ENCODE measurements at regions of chr7 and their contacts with region 1.

Region 1: GRCh38 chr7:47254081-47255006 is 327.6 kb downstream of the TNS3 start:
- DNase-seq: no peak
- ATAC-seq: peak; percentile 90
- H3K4me3 ChIP-seq: peak overlapping the region; percentile 51 to 76
- H3K27ac ChIP-seq: peak overlapping the region; percentile 20; the same call in 1 of the 2 replicates
- H3K4me1 ChIP-seq: peaks cover 8% of the 10 kb centered on the region; the same call in 1 of the 2 replicates
- H3K27me3 ChIP-seq: no peaks in the 10 kb centered on the region; the same call in 1 of the 2 replicates
- CTCF ChIP-seq: peak; percentile 100

Region 2: DNA sequence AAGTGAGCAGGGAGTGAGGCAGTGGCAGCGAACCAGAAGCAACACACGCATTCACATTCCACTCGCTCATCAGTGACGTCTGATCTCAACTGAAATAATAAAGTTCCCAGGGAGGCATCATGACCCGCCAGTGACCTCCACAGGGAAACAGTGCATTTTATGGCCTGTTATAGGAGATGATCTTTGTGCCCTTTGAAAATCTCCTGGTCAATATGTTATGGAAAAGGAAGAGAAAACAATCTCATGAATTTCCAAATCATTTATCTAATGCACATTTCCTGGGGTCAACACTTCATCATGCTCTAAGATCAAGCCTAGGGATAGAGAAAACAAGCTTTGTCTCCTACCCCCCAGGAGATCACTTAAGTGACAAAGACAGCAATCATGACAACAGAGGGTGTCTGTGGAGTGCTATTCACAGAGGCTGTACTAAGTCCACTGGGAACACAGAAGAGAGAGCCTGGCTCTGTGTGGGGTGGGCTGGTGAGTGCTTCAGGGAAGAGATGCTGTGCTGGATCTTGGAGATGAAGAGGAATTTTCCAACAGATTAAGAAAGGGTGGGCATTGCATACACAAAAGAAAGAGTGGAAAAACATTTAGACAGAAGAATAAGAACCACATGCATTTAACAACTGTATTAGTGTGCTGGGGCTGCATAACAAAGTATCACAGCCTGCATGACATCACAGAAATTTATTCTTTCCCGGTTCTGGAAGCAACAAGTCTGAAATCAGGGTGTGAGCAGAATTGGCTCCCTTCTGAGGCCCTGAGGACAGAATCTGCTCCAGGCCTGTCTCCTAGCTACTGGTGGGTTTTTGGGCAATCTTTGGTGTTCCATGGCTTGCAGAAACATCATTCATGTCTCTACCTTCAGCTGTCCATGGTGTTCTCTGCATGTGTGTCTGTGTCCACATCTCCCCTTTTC is 719.4 kb before region 1 on chr7:
- CTCF ChIA-PET with region 1: no interaction called
- POLR2A ChIA-PET with region 1: no interaction called
- in situ Hi-C with region 1: no loop called
- intact Hi-C with region 1: no loop called
- DNase-seq: no peak
- ATAC-seq: no peak
- H3K4me3 ChIP-seq: no peak overlapping the region
- H3K27ac ChIP-seq: no peak overlapping the region
- H3K4me1 ChIP-seq: no peaks in the 10 kb centered on the region
- H3K27me3 ChIP-seq: no peaks in the 10 kb centered on the region
- CTCF ChIP-seq: no peak

Region 3: GRCh38 chr7:47228386-47229014 is 25.8 kb before region 1 on chr7:
- CTCF ChIA-PET with region 1: interaction called, 10 read pairs
- POLR2A ChIA-PET with region 1: no interaction called
- in situ Hi-C with region 1: no loop called
- intact Hi-C with region 1: no loop called
- DNase-seq: no peak
- ATAC-seq: no peak
- H3K4me3 ChIP-seq: no peak overlapping the region
- H3K27ac ChIP-seq: no peak overlapping the region
- H3K4me1 ChIP-seq: no peaks in the 10 kb centered on the region
- H3K27me3 ChIP-seq: peaks cover 2% of the 10 kb centered on the region; the same call in 1 of the 2 replicates
- CTCF ChIP-seq: no peak

Region 4: DNA sequence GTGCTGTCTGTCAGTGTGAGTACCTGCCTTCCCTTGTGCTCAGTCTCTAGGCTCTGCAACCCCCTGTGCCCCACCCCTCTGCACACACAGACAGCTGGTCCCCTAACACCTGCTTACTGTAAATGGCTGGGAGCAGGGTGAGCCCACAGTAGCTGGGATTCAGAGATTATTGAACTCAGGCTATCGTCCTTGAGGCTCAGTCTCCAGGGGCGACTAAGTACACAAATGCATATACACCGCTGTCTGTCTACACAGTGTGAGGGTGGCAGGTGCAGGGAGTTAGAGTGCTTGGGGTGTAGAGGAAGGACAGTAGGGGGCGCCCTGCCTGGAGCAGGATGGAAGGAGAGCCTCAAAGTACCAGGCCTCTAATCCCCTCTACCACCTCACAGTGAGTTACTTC is 847.6 kb after region 1 on chr7:
- CTCF ChIA-PET with region 1: no interaction called
- POLR2A ChIA-PET with region 1: interaction called, 10 read pairs
- in situ Hi-C with region 1: no loop called
- intact Hi-C with region 1: no loop called
- DNase-seq: no peak
- ATAC-seq: peak; percentile 49; the same call in 1 of the 2 replicates
- H3K4me3 ChIP-seq: no peak overlapping the region
- H3K27ac ChIP-seq: no peak overlapping the region; the same call in 1 of the 2 replicates
- H3K4me1 ChIP-seq: peaks cover 14% of the 10 kb centered on the region
- H3K27me3 ChIP-seq: no peaks in the 10 kb centered on the region
- CTCF ChIP-seq: peak; percentile 77